ENCODE measurements at regions of chr7 and their contacts with region 1.

Region 1: GRCh38 chr7:128862571-128863432 is at the start of gene ATP6V1F:
- DNase-seq: peak; percentile 99
- ATAC-seq: peak; percentile 92
- H3K4me3 Mint-ChIP-seq: peak within 1 kb of the TSS; percentile 97
- H3K27ac Mint-ChIP-seq: peak within 1 kb of the TSS; percentile 96
- H3K4me1 Mint-ChIP-seq: peaks cover 30% of the 10 kb centered on the region
- H3K27me3 Mint-ChIP-seq: no peaks in the 10 kb centered on the region
- CTCF ChIP-seq: no peak
- total RNA-seq, gene ATP6V1F: 100.0 and 113 TPM in 2 replicates

Region 2: DNA sequence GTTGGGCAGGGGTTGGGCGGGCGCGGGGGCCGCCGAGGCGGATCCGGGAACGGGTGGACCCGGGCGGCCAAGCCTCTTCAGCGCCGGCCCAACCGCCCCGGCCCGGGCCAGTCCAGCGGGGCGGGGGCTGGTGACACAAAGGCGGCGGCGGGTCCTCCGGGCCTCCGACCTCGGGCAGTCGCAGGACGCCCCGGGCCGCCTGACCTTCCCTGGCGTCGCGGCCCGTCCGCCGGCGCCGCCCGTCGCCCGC is 332.0 kb before region 1 on chr7:
- CTCF ChIA-PET with region 1: no interaction called
- POLR2A ChIA-PET with region 1: no interaction called
- intact Hi-C with region 1: loop called (anchors 5 kb)
- DNase-seq: no peak
- ATAC-seq: no peak
- H3K4me3 Mint-ChIP-seq: no peak overlapping the region
- H3K27ac Mint-ChIP-seq: no peak overlapping the region
- H3K4me1 Mint-ChIP-seq: peaks cover 32% of the 10 kb centered on the region
- H3K27me3 Mint-ChIP-seq: no peaks in the 10 kb centered on the region
- CTCF ChIP-seq: no peak

Region 3: DNA sequence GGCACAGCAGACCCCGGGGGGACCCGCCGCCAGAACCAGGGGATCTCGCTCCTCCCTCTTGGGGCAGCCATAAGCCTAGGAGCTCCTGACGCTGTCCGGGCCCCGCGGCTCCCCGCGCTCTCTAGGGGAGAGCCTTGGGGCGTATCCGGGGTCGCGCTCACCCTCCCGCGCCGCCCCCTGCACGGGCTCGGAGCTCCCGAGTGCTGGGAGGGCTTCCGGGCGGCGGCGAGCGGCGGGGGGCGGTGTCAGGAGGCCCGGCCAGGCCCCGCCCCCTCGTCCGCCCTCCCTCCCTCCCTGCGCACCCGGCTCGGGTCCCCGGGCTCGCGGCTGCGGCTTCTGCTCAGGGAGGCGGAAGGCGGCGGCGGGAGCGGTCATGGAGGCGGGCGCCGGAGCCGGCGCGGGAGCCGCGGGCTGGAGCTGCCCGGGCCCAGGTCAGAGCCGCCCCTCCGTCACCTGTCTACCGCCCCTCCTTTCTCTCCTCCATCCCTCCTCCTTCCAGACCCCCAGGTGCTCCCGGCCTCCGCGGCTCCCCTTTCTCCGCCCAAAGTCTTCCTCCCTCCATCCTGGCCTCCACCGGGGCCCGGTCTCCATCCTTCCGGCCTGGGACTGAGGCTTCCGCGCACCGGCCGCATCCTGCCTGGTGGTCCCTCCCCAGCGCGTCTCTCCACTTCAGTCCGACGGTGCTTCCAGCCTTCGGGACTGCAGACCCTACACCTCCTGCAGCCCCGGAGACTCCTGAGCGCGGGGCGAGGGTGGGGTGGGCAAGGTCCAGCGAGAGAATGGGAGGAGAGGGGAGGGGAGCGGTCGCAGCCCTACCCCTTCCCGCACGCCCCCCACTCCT is 71.5 kb before region 1 on chr7:
- CTCF ChIA-PET with region 1: no interaction called
- POLR2A ChIA-PET with region 1: interaction called, 3 read pairs
- intact Hi-C with region 1: loop called (anchors 2 kb)
- DNase-seq: peak; percentile 71
- ATAC-seq: peak; percentile 91
- H3K4me3 Mint-ChIP-seq: peak overlapping the region; percentile 87
- H3K27ac Mint-ChIP-seq: no peak overlapping the region
- H3K4me1 Mint-ChIP-seq: peaks cover 10% of the 10 kb centered on the region
- H3K27me3 Mint-ChIP-seq: no peaks in the 10 kb centered on the region
- CTCF ChIP-seq: no peak

Region 4: GRCh38 chr7:128883622-128884501 is 21.1 kb after region 1 on chr7:
- CTCF ChIA-PET with region 1: interaction called, 20 read pairs
- POLR2A ChIA-PET with region 1: interaction called, 8 read pairs
- intact Hi-C with region 1: loop called (anchors 2 kb)
- DNase-seq: peak; percentile 82
- ATAC-seq: peak; percentile 85
- H3K4me3 Mint-ChIP-seq: peak overlapping the region; percentile 77
- H3K27ac Mint-ChIP-seq: no peak overlapping the region
- H3K4me1 Mint-ChIP-seq: peaks cover 3% of the 10 kb centered on the region
- H3K27me3 Mint-ChIP-seq: peaks cover 3% of the 10 kb centered on the region
- CTCF ChIP-seq: no peak

Measured in activated B cell treated with CpG ODN at 0.5 μM for 24 hours (primary cell).